ENCODE measurements at regions of chr10 and their contacts with region 1.

Region 1: DNA sequence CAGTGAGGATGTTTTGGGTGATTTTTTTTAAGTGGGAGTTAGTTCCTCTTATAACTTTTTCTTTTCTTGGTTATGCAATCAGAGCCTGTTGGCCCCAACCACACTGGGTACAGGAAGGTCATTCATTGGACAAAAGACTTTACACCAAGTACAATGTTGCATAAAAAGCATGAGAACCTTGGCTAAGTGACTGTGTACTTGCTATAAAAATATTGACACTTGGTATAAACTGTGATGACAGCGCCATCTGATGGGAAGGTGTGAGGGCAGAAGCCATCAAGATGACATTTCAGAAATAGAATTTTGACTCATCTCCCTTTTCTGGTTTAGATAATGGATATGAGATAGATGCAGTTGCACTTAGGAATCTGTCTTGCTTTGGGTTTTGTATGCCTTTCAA is 126.4 kb upstream of the CCDC6 start:
- DNase-seq: peak; percentile 87 to 95 (median 94)
- H3K4me3 ChIP-seq: peak overlapping the region in 1 of 3 experiments; percentile 2
- H3K4me3 Mint-ChIP-seq: no peak overlapping the region
- H3K27ac ChIP-seq: peak overlapping the region; percentile 80 to 83
- H3K27ac Mint-ChIP-seq: peak overlapping the region; percentile 87 to 96 (median 95)
- H3K4me1 ChIP-seq: peaks cover 41 to 42% of the 10 kb centered on the region in 2 donors
- H3K4me1 Mint-ChIP-seq: peaks cover 38% of the 10 kb centered on the region
- H3K27me3 ChIP-seq: no peaks in the 10 kb centered on the region
- H3K27me3 Mint-ChIP-seq: peaks cover 0 to 2% (median 2%) of the 10 kb centered on the region in 3 donors
- CTCF ChIP-seq: peak; percentile 76

Region 2: DNA sequence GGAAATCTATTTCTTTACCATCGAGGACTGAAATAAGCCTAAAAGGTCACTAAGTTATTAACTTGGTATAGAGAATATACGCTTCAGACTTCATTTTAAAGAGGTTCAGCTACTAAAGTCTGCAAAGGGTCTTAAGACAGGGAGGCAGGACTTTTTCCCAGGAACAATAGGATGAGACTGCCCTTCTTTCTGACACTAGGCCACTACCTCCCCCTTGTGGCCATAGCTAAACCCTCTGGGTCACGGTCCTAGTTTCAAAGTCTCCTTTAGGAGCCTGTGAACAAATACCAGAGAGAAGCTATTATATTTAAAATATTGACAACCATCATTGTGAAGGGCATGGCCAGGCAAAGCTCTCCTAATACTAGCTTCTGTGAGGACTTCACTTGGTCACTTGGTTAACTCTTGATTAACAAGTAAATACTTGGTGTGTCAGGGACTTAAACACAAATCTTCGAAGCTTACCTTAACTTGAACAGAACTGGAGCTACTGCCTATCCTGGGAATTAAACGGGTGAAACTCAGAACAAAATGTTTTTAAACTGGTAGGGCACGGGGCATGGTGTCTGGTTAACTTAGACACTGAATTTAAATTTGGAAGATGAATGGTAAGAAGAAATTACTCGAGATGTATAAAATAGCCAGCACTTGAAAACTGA is 202.0 kb before region 1 on chr10:
- intact Hi-C with region 1: loop called (anchors 10 kb)
- DNase-seq: peak; percentile 6 to 29 (median 15)
- H3K4me3 ChIP-seq: no peak overlapping the region
- H3K4me3 Mint-ChIP-seq: no peak overlapping the region
- H3K27ac ChIP-seq: no peak overlapping the region
- H3K27ac Mint-ChIP-seq: no peak overlapping the region
- H3K4me1 ChIP-seq: peaks cover 4 to 8% of the 10 kb centered on the region in 2 donors
- H3K4me1 Mint-ChIP-seq: peaks cover 15% of the 10 kb centered on the region
- H3K27me3 ChIP-seq: no peaks in the 10 kb centered on the region
- H3K27me3 Mint-ChIP-seq: peaks cover 0 to 2% (median 0%) of the 10 kb centered on the region in 3 donors
- CTCF ChIP-seq: peak; percentile 84

Region 3: GRCh38 chr10:59872892-59873463 is 159.7 kb before region 1 on chr10:
- intact Hi-C with region 1: loop called in 1 of 2 experiments (anchors 10 kb)
- DNase-seq: no peak
- H3K4me3 ChIP-seq: no peak overlapping the region
- H3K4me3 Mint-ChIP-seq: no peak overlapping the region
- H3K27ac ChIP-seq: no peak overlapping the region
- H3K27ac Mint-ChIP-seq: peak overlapping the region in 1 of 7 donors; percentile 17
- H3K4me1 ChIP-seq: no peaks in the 10 kb centered on the region
- H3K4me1 Mint-ChIP-seq: peaks cover 20% of the 10 kb centered on the region
- H3K27me3 ChIP-seq: no peaks in the 10 kb centered on the region
- H3K27me3 Mint-ChIP-seq: peaks cover 0 to 2% (median 0%) of the 10 kb centered on the region in 3 donors
- CTCF ChIP-seq: no peak

Region 4: GRCh38 chr10:59885430-59886134 is 147.1 kb before region 1 on chr10:
- intact Hi-C with region 1: loop called in 1 of 2 experiments (anchors 10 kb)
- DNase-seq: peak; percentile 66 to 80 (median 77)
- H3K4me3 ChIP-seq: peak overlapping the region in 1 of 3 experiments; percentile 48
- H3K4me3 Mint-ChIP-seq: peak overlapping the region in 1 of 2 donors; percentile 72
- H3K27ac ChIP-seq: peak overlapping the region; percentile 35 to 64
- H3K27ac Mint-ChIP-seq: peak overlapping the region; percentile 70 to 94 (median 89)
- H3K4me1 ChIP-seq: peaks cover 55 to 65% of the 10 kb centered on the region in 2 donors
- H3K4me1 Mint-ChIP-seq: peaks cover 79% of the 10 kb centered on the region
- H3K27me3 ChIP-seq: no peaks in the 10 kb centered on the region
- H3K27me3 Mint-ChIP-seq: peaks cover 0 to 4% (median 0%) of the 10 kb centered on the region in 3 donors
- CTCF ChIP-seq: no peak

Region 5: DNA sequence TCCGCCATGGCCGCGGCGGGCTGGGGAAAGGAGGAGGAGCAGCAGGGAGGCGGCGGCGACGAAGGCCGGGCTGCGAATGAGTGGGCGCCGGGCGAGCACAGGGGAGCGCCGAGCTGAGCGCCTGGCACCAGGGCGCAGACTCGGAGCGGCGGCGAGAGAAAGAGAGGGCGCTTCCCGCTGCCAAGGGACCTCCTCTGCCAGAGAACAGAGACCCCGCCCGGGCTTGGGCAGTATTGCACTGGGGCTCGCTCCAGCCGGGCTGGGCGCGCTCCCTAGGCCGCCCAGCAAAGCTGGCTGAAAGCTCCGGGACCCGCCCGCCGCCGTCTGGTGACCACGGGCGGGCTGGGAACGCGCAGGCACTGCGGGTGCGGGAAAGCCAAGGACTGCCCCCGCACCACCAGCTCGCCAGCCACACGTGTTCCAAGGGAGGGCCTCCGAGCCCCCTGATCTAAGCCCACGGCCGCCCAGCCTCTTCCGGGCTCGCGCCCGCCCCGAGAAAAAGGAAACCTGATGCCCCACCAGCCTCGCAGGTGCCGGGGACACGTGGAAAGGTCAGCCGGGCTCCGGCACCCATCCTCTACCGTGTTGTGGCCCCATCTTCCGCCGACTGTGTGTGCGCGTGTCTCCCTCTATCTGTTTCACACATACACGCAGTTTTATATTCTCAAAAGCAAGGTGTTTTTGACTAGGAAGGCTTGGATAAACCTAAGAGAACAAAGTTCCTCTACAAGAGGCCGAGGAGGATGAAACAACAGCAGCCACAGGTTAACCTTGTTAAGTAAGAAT is 126.1 kb before region 1 on chr10 and contains the start of gene CCDC6:
- intact Hi-C with region 1: loop called in 1 of 2 experiments (anchors 10 kb)
- DNase-seq: peak; percentile 84 to 87 (median 85)
- H3K4me3 ChIP-seq: peak within 1 kb of the TSS; percentile 64 to 95 (median 83)
- H3K4me3 Mint-ChIP-seq: peak within 1 kb of the TSS; percentile 95 to 98
- H3K27ac ChIP-seq: peak within 1 kb of the TSS; percentile 73 to 80
- H3K27ac Mint-ChIP-seq: peak within 1 kb of the TSS; percentile 78 to 94 (median 88)
- H3K4me1 ChIP-seq: peaks cover 43 to 48% of the 10 kb centered on the region in 2 donors
- H3K4me1 Mint-ChIP-seq: peaks cover 51% of the 10 kb centered on the region
- H3K27me3 ChIP-seq: no peaks in the 10 kb centered on the region
- H3K27me3 Mint-ChIP-seq: peaks cover 0 to 2% (median 2%) of the 10 kb centered on the region in 3 donors
- CTCF ChIP-seq: peak; percentile 90
- polyA plus RNA-seq, gene CCDC6: 4.2 to 13.5 (median 6.2) TPM

Region 6: DNA sequence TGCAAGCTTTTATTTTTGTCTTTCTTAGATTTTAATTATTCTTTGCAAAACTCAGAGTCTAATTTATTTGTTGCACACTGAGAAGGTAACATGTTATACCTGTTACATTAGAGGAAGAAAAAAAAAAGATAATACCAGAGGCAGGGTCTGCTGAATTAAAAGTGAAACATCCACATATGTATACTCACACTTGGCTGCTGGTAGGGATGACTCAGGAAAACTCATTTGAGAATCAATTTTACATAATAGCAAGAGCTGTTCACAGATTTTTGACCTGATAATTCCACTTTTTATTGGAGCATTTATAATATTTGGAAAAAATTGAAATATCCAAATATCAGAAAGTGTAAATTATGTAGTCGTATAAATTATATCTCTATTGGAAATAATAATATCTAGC is 48.3 kb before region 1 on chr10:
- intact Hi-C with region 1: no loop called
- DNase-seq: no peak
- H3K4me3 ChIP-seq: no peak overlapping the region
- H3K4me3 Mint-ChIP-seq: no peak overlapping the region
- H3K27ac ChIP-seq: no peak overlapping the region
- H3K27ac Mint-ChIP-seq: no peak overlapping the region
- H3K4me1 ChIP-seq: no peaks in the 10 kb centered on the region
- H3K4me1 Mint-ChIP-seq: peaks cover 4% of the 10 kb centered on the region
- H3K27me3 ChIP-seq: no peaks in the 10 kb centered on the region
- H3K27me3 Mint-ChIP-seq: no peaks in the 10 kb centered on the region
- CTCF ChIP-seq: no peak

Region 7: DNA sequence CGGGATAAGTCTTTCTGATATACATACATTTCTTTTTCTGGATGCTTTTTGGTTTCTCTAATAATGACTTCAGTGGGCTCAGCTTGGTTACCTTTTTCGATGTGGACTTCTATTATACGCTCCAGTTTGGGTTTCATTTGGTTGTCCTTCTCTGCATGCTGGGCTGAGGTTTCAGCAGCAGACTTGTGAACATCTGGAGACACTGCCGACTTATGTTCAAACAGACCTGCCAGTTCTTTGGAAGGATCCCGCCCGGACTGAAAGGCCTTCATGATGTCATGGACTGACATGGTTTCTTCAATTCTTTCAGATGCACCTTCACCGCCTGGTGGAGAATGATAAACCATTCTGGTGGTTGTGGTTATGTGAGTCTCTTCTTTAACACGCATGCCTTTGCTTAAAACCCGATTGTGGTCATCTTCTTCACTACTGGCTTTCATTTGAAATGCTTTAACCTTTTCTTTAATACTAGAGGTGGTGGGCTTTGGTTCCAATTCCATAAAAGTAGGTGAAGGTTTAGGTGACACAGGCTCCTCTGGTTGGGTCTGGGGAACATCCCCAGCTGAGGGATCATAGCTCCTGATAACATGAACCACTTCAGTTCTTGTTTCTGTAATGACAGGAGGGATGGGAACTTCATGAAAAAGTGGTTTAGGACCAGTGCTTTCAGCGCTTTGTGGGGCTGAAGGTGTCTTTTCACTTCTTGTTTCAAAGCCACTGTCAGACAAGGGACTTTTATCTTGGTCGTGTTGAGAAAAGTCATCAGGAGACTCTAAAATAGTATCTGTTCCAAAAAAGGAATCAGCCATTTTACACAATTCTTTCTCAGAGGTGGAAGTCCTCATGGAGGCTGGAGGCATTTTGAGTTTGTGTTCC is 41.3 kb after region 1 on chr10:
- intact Hi-C with region 1: no loop called
- DNase-seq: no peak
- H3K4me3 ChIP-seq: no peak overlapping the region
- H3K4me3 Mint-ChIP-seq: no peak overlapping the region
- H3K27ac ChIP-seq: no peak overlapping the region
- H3K27ac Mint-ChIP-seq: no peak overlapping the region
- H3K4me1 ChIP-seq: no peaks in the 10 kb centered on the region
- H3K4me1 Mint-ChIP-seq: no peaks in the 10 kb centered on the region
- H3K27me3 ChIP-seq: no peaks in the 10 kb centered on the region
- H3K27me3 Mint-ChIP-seq: no peaks in the 10 kb centered on the region
- CTCF ChIP-seq: no peak

Region 8: DNA sequence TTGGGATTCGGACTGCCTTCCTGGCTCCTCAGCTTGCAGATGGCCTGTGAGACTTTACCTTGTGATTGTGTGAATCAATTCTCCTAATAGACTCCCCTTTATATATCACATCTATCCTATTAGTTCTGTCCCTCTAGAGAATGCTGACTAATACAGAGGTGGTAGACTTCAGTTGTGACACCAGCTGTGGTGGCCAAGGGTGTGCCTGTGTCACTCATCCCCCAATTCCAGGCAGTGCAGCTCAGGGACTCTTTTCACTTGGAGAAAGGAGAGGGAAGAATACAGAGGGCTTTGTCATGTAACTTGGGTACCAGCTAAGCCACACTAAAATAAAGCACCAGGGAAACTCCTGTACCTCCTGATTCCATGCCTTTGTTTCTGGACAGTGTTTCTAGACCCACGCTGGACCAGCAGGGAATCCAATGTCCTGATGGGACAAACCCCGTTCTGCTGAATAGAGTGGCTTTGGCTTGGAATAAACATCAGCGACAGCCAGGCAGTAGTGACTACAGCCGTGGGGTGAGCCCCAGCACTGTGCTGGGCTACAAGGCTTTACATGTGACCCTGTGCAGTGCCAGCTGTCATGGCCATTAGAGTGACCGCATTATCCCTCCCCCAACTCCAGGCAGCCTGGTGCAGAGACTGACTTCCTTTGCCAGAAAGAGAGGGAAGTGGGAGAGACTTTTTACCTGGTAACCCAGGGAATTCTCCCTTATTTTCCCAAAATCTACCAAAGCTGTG is 123.4 kb after region 1 on chr10:
- intact Hi-C with region 1: no loop called
- DNase-seq: no peak
- H3K4me3 ChIP-seq: no peak overlapping the region
- H3K4me3 Mint-ChIP-seq: no peak overlapping the region
- H3K27ac ChIP-seq: no peak overlapping the region
- H3K27ac Mint-ChIP-seq: no peak overlapping the region
- H3K4me1 ChIP-seq: no peaks in the 10 kb centered on the region
- H3K4me1 Mint-ChIP-seq: no peaks in the 10 kb centered on the region
- H3K27me3 ChIP-seq: no peaks in the 10 kb centered on the region
- H3K27me3 Mint-ChIP-seq: peaks cover 0 to 1% (median 0%) of the 10 kb centered on the region in 3 donors
- CTCF ChIP-seq: no peak